Activated naive CD4-positive, alpha-beta T cell treated with anti-CD3 and anti-CD28 coated beads, Interleukin-2, amount 10 ng/mL, durations not matched to agents 7 days and 5 days (primary cell): ENCODE measurements at regions of chr11 and their contacts with region 1.

Region 1: DNA sequence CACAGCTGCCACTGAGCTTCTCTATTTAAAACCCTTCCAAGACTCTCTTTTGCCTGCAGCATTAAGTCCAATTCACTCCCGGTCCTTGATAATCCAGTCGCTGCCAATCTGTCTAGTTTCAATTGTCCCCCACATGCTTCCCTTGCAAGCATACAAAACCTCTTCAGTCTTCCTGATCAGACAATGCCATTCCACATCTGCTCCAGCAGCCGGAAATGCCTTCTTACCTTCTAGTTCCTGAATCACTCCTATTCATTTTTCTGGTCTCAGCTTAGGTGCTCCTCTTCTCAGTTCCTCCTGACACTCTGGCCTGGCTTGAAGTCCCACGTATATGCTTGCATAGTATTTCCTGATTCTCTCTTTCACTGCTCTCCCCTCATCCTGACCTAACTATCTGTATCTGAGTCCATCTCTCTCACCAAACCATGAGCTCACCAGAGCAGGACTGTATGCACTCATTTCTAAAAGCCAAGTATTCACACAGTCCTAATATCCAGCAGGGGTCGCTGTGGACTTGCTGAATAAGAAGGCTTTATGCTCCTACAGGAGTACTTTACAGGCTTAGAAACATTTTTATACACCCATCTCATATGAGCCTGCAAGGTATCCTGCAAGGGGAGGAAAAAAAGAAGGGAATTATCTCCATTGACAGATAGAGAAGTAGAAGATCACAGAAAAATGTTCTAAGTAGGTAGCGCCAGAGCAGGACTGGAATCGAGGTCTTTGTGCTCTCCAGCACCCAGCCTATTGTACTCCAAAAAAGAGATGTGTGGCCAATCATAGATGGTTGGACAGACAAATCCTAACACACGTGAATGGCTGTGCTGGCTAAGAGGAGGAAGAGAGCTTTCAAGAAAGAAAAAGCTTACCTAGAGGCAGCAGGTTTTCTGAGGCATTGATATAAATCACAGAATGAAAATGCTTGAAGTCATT is 19.2 kb downstream of the XRRA1 start:
- DNase-seq: peak; percentile 77
- H3K4me3 Mint-ChIP-seq: no peak overlapping the region
- H3K27ac Mint-ChIP-seq: no peak overlapping the region
- H3K4me1 Mint-ChIP-seq: peaks cover 19% of the 10 kb centered on the region
- H3K27me3 Mint-ChIP-seq: no peaks in the 10 kb centered on the region

Region 2: DNA sequence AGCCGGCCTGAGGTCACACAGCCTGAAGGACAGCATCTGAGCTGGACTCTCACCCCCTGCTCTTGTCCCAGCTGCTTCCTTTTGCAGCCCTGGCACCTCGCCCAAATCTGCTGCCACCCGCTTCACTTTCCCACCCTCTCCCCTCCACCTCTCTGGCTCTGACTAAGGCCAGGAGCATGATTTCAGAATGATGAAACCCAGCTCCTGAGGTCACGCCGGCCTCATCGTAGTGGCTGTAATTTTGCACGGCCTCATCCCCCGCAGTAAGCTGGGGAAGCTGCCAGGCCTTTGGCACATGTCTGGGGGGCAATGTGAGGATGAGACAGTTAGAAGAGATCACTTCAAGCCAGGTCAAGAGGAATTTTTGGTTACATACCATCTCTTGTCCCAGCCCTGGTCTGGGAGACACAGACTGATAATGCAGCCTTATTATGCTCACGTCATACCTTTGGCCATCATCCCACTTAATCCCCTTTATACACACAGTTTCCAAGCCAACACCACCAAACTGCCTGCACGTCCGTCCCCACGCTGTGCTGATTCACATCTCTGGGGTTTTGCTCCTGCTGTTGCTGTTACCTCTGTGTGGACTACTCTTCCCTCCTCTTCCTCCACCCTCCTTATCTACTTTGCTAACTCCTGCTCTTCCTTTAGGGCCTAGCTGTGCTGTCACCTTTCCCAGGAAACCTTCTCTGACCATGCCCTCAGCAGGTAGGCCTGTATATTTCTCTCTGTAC is 256.6 kb before region 1 on chr11:
- CTCF ChIA-PET with region 1: no interaction called
- DNase-seq: no peak
- H3K4me3 Mint-ChIP-seq: no peak overlapping the region
- H3K27ac Mint-ChIP-seq: no peak overlapping the region
- H3K4me1 Mint-ChIP-seq: no peaks in the 10 kb centered on the region
- H3K27me3 Mint-ChIP-seq: peaks cover 4% of the 10 kb centered on the region

Region 3: GRCh38 chr11:75022759-75023396 is 93.2 kb after region 1 on chr11:
- CTCF ChIA-PET with region 1: interaction called, 13 read pairs
- DNase-seq: peak; percentile 85
- H3K4me3 Mint-ChIP-seq: no peak overlapping the region
- H3K27ac Mint-ChIP-seq: no peak overlapping the region
- H3K4me1 Mint-ChIP-seq: no peaks in the 10 kb centered on the region
- H3K27me3 Mint-ChIP-seq: no peaks in the 10 kb centered on the region

Region 4: GRCh38 chr11:75031771-75032549 is 102.3 kb after region 1 on chr11:
- CTCF ChIA-PET with region 1: interaction called, 36 read pairs
- DNase-seq: peak; percentile 78
- H3K4me3 Mint-ChIP-seq: no peak overlapping the region
- H3K27ac Mint-ChIP-seq: peak overlapping the region; percentile 43
- H3K4me1 Mint-ChIP-seq: peaks cover 6% of the 10 kb centered on the region
- H3K27me3 Mint-ChIP-seq: peaks cover 4% of the 10 kb centered on the region

Region 5: DNA sequence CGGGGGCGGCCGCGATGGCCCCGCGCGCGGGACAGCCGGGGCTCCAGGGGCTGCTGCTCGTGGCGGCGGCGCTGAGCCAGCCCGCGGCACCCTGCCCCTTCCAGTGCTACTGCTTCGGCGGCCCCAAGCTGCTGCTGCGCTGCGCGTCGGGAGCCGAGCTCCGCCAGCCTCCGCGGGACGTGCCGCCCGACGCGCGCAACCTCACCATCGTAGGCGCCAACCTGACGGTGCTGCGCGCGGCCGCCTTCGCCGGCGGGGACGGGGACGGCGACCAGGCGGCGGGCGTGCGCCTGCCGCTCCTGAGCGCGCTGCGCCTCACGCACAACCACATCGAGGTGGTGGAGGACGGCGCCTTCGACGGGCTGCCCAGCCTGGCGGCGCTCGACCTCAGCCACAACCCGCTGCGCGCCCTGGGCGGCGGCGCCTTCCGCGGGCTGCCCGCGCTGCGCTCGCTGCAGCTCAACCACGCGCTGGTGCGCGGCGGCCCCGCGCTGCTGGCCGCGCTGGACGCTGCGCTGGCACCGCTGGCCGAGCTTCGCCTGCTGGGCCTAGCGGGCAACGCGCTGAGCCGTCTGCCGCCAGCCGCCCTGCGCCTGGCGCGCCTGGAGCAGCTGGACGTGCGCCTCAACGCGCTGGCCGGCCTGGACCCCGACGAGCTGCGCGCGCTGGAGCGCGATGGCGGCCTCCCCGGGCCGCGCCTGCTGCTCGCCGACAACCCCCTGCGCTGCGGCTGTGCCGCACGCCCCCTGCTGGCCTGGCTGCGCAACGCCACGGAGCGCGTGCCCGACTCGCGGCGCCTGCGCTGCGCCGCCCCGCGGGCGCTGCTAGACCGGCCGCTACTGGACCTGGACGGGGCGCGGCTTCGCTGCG is 311.6 kb after region 1 on chr11:
- CTCF ChIA-PET with region 1: interaction called, 48 read pairs
- DNase-seq: peak; percentile 87
- H3K4me3 Mint-ChIP-seq: peak overlapping the region; percentile 62
- H3K27ac Mint-ChIP-seq: no peak overlapping the region
- H3K4me1 Mint-ChIP-seq: peaks cover 13% of the 10 kb centered on the region
- H3K27me3 Mint-ChIP-seq: peaks cover 90% of the 10 kb centered on the region

Region 6: GRCh38 chr11:75248690-75249268 is 319.1 kb after region 1 on chr11:
- CTCF ChIA-PET with region 1: interaction called, 48 read pairs
- DNase-seq: peak; percentile 91
- H3K4me3 Mint-ChIP-seq: no peak overlapping the region
- H3K27ac Mint-ChIP-seq: no peak overlapping the region
- H3K4me1 Mint-ChIP-seq: no peaks in the 10 kb centered on the region
- H3K27me3 Mint-ChIP-seq: peaks cover 59% of the 10 kb centered on the region